ENCODE measurements at regions of chr1 and their contacts with region 1.

Region 1: DNA sequence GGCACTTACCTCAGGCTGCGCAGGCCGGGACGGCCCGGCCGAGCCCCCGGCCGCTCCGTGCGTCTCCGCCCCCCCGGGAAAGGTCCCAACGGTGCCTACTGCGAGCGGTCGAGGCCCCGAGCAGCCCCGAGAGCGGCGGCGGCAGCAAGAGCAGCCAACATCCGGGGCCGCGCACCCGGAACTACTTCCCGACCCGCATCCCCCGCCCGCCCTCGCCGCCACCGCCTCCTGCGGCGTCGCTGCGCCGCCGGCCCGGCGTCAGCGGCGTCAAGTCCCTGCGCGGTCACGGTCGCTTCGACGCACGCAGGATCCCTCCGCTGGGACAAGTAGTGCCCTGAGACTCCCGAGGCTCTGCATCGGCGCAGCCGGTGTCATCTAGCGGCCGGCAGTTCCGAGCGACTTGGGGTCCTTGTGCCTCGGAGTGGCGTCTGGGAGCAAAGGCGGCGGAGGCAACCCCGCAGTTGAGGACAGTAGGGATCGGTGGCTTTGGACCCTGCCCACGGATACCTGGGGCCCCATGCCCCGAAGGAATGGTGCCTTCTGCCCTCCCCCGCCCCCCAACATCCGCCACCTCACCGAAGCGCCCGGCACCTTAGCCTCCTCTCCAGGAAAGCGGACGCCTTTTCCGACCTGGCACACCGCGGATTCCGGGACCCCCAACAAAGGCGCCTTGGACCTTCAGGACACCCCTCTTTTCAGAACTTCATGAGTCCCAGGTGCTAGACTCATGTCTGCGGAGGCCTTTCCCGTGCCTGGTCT is at the start of gene FOXJ3:
- DNase-seq: peak; percentile 89 to 91 (median 90)
- H3K4me3 ChIP-seq: peak within 1 kb of the TSS; percentile 62 to 92
- H3K4me3 Mint-ChIP-seq: peak within 1 kb of the TSS; percentile 93 to 97 (median 95)
- H3K27ac ChIP-seq: peak within 1 kb of the TSS; percentile 83
- H3K27ac Mint-ChIP-seq: peak within 1 kb of the TSS; percentile 94 to 96 (median 95)
- H3K4me1 ChIP-seq: peaks cover 41% of the 10 kb centered on the region
- H3K4me1 Mint-ChIP-seq: peaks cover 33 to 54% (median 44%) of the 10 kb centered on the region in 4 donors
- H3K27me3 ChIP-seq: no peaks in the 10 kb centered on the region
- H3K27me3 Mint-ChIP-seq: no peaks in the 10 kb centered on the region
- total RNA-seq, gene FOXJ3: 97.4 to 102 TPM

Region 2: GRCh38 chr1:41919764-41920397 is 415.3 kb before region 1 on chr1:
- CTCF ChIA-PET with region 1: no interaction called
- POLR2A ChIA-PET with region 1: no interaction called
- intact Hi-C with region 1: loop called (anchors 10 kb)
- DNase-seq: peak; percentile 78 to 89 (median 85)
- H3K4me3 ChIP-seq: peak overlapping the region; percentile 45 to 68
- H3K4me3 Mint-ChIP-seq: peak overlapping the region; percentile 92 to 98 (median 95)
- H3K27ac ChIP-seq: peak overlapping the region; percentile 50
- H3K27ac Mint-ChIP-seq: peak overlapping the region; percentile 93 to 100 (median 98)
- H3K4me1 ChIP-seq: peaks cover 56% of the 10 kb centered on the region
- H3K4me1 Mint-ChIP-seq: peaks cover 46 to 61% (median 54%) of the 10 kb centered on the region in 4 donors
- H3K27me3 ChIP-seq: no peaks in the 10 kb centered on the region
- H3K27me3 Mint-ChIP-seq: no peaks in the 10 kb centered on the region

Region 3: DNA sequence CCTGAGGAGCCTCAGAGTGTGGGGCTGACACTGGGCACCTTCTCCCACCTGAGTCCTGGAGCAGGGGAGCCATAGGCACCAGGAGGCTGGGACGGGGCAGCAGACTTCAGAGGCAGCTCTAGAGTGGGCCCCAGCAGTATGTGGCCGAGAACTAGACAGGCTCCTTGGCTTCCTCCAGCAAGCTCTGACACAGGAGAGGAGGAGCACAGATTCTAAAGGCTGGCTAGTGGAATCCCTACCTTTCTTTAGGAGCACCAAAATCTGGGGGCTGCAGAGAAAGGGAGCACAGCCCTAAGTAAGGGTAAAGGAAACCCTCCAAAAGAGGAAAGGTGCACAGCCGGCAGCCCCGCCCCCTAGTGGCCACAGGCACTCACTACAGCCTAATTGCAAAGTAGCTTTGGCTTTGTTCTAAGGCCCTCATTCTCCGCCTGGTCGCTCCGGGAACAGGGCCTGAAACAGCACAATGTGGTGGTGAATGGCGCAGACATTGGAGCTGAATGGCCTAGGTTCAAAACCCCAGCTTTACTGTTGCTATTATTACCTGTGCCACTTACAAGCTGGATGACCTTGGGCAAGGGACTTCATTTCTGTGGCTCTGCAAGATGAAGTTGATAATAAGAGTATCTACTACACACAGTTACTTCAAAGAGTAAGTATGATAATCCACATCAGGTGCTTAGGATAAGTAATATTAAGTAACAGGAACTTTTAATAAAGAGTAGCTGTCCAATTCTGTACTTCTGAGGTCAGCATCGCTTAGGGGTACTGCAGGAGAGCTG is 161.9 kb before region 1 on chr1:
- CTCF ChIA-PET with region 1: interaction called, 13 read pairs
- POLR2A ChIA-PET with region 1: no interaction called
- intact Hi-C with region 1: loop called (anchors 1 kb)
- DNase-seq: peak; percentile 46 to 60 (median 52)
- H3K4me3 ChIP-seq: no peak overlapping the region
- H3K4me3 Mint-ChIP-seq: no peak overlapping the region
- H3K27ac ChIP-seq: no peak overlapping the region
- H3K27ac Mint-ChIP-seq: peak overlapping the region in 2 of 7 donors; percentile 45 to 55
- H3K4me1 ChIP-seq: no peaks in the 10 kb centered on the region
- H3K4me1 Mint-ChIP-seq: peaks cover 0 to 4% (median 1%) of the 10 kb centered on the region in 4 donors
- H3K27me3 ChIP-seq: no peaks in the 10 kb centered on the region
- H3K27me3 Mint-ChIP-seq: no peaks in the 10 kb centered on the region

Region 4: DNA sequence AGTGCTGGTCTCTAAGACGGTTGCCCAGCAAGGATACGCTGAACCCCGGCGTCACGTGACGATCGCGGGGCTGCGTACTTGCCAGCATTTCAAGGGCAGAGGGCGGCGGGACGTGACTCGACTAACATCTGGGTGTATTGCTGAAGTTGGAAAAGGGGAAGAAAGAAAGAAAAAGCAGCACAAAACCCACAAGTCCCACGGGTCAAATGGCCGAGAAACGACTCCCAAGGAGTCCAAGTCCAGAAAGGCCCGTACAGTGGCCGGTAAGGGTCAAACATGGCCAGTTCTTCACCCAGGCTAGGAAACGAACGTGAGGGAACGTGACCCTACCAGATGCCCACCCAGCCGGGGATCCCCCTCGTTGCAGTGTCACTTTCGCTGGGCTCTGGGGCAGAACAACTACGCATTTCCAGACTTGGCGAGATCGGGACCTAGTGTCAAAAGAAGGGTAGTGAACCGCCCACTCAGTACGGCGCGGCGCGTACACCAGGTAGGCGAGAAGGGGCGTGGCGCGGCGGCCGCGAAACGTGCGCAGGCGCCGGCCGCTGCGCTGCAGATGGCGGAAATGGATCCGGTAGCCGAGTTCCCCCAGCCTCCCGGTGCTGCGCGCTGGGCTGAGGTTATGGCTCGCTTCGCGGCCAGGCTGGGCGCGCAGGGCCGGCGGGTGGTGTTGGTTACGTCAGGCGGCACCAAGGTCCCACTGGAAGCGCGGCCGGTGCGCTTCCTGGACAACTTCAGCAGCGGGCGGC is 121.0 kb after region 1 on chr1 and contains the starts of genes PPCS and ZMYND12:
- CTCF ChIA-PET with region 1: no interaction called
- POLR2A ChIA-PET with region 1: interaction called, 12 read pairs
- intact Hi-C with region 1: loop called (anchors 1 kb)
- DNase-seq: peak; percentile 91 to 96 (median 93)
- H3K4me3 ChIP-seq: peak within 1 kb of the TSS; percentile 84 to 96
- H3K4me3 Mint-ChIP-seq: peak within 1 kb of the TSS; percentile 91 to 100 (median 99)
- H3K27ac ChIP-seq: peak within 1 kb of the TSS; percentile 99
- H3K27ac Mint-ChIP-seq: peak within 1 kb of the TSS; percentile 92 to 100 (median 99)
- H3K4me1 ChIP-seq: peaks cover 29% of the 10 kb centered on the region
- H3K4me1 Mint-ChIP-seq: peaks cover 21 to 43% (median 33%) of the 10 kb centered on the region in 4 donors
- H3K27me3 ChIP-seq: no peaks in the 10 kb centered on the region
- H3K27me3 Mint-ChIP-seq: no peaks in the 10 kb centered on the region
- total RNA-seq, gene PPCS: 61.1 to 65.2 TPM
- total RNA-seq, gene ZMYND12: 0.58 to 1.3 TPM

Region 5: DNA sequence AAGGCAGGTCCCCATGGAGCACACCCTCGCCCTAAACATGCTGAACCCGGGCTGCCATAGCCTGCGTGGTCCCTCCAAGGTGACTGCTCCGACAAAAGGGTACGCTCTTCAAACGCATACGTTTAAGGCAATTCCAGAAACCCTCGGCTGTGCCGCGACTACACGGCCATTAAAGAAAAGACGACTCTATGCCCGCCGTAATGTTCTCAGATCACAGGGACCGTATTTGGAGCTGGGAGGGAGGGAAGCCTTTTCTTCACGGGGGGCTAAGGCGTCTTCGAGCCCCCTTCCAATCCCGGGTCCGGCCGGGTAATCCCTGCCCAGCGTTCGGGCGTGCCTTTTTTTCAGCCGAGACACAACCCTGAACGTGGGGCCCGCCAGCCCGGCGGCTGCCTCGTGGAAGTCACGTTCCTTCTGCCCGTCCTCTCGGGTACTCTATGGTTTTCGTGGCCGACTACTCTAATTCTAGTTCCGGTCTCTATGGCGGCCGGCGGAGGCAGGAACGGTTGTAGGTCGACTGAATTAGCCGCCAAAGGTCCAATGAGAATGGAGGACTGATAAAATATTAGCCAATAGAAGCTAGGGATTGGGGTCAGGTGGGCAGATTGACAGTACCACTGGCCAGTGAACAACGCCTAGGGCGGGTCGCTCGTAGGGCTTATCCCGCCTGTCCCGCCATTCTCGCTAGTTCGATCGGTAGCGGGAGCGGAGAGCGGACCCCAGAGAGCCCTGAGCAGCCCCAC is 346.7 kb after region 1 on chr1 and contains the start of gene YBX1:
- CTCF ChIA-PET with region 1: no interaction called
- POLR2A ChIA-PET with region 1: no interaction called
- intact Hi-C with region 1: loop called (anchors 1 kb)
- DNase-seq: peak; percentile 97 to 98 (median 97)
- H3K4me3 ChIP-seq: peak within 1 kb of the TSS; percentile 77 to 90
- H3K4me3 Mint-ChIP-seq: peak within 1 kb of the TSS; percentile 96 to 100 (median 98)
- H3K27ac ChIP-seq: peak within 1 kb of the TSS; percentile 78
- H3K27ac Mint-ChIP-seq: peak within 1 kb of the TSS; percentile 96 to 99 (median 99)
- H3K4me1 ChIP-seq: peaks cover 49% of the 10 kb centered on the region
- H3K4me1 Mint-ChIP-seq: peaks cover 43 to 61% (median 52%) of the 10 kb centered on the region in 4 donors
- H3K27me3 ChIP-seq: no peaks in the 10 kb centered on the region
- H3K27me3 Mint-ChIP-seq: no peaks in the 10 kb centered on the region
- total RNA-seq, gene YBX1: 328 TPM

Region 6: DNA sequence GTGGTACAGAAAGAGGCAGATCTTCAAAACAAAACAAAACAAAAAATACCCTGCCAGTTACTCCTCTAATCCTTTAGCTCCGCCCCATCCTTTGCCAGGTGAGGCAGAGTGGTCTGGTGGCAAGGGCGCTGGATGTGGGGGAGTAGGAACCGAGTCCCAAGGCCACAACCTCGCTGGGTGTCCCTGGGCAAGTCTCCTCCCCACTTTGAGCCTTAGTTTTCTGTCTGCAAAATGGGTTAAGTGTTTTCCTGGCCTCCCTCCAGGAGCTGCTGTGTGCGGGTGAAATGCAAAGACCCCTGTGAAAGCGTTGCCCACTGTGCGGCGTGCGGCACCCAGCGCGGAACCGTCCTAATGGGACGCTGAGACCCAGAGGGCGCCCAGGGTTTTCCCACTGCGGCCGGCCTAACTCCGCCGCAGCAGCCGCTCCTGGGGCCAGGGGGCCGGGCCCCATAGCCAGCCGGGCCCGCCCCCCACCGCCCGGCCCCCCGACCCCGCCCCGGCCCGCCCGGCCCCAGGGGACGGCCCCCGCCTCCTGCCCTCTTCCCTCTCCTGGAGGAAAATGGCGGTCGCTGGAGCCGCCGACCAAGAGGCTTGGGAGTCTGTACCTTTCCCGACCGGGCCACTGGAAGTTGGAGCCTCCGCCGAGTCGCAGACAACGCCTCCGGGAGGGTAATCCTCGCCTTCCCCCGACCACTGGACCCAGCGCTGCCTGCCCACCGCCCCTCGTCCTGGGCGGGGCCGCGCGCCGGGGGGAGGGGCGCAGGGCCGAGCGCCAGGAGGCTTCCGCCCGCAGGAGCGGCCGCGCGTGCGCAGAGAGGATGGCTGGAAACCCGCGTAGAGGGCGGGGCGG is 481.6 kb after region 1 on chr1 and contains the starts of genes ERMAP and SVBP:
- CTCF ChIA-PET with region 1: no interaction called
- POLR2A ChIA-PET with region 1: no interaction called
- intact Hi-C with region 1: loop called (anchors 2 kb)
- DNase-seq: peak; percentile 88 to 97 (median 92)
- H3K4me3 ChIP-seq: peak within 1 kb of the TSS; percentile 43 to 74
- H3K4me3 Mint-ChIP-seq: peak within 1 kb of the TSS; percentile 82 to 93 (median 86)
- H3K27ac ChIP-seq: peak within 1 kb of the TSS; percentile 87
- H3K27ac Mint-ChIP-seq: peak within 1 kb of the TSS; percentile 86 to 96 (median 94)
- H3K4me1 ChIP-seq: peaks cover 17% of the 10 kb centered on the region
- H3K4me1 Mint-ChIP-seq: peaks cover 19 to 32% (median 27%) of the 10 kb centered on the region in 4 donors
- H3K27me3 ChIP-seq: no peaks in the 10 kb centered on the region
- H3K27me3 Mint-ChIP-seq: no peaks in the 10 kb centered on the region
- total RNA-seq, gene ERMAP: 6.5 to 8.6 TPM
- total RNA-seq, gene SVBP: 20.4 to 23.5 TPM